ENCODE measurements at regions of chr6 and their contacts with region 1.

Region 1: DNA sequence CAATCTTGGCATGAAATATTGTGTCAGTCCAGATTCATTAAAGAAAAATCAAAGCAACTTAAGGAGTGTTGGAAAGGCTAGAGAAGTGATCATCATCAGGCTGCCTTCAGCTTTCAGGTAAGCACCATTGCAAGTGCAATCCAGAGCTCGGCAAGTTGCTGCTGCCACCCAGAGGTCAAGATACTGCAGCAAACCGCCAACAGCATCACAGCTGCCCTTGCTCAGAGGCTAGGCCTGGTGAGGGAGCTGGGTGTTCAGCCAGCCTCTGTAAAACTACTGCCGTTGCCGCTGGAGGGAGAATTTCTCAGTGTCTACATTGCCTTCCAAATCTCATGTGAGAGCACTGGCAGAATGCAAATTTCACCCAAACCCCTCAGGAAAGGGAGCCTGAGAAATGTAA is 5.8 kb upstream of the SYNE1 start:
- DNase-seq: peak; percentile 82
- ATAC-seq: peak; percentile 74

Region 2: GRCh38 chr6:152484806-152485205 is 158.2 kb before region 1 on chr6:
- intact Hi-C with region 1: loop called (anchors 10 kb)
- DNase-seq: no peak
- ATAC-seq: no peak

Region 3: GRCh38 chr6:152552616-152553209 is 90.3 kb before region 1 on chr6:
- intact Hi-C with region 1: loop called (anchors 1 kb)
- DNase-seq: peak; percentile 82
- ATAC-seq: peak; percentile 82